Transverse colon (tissue), 4 donors: ENCODE measurements at regions of chr2 and their contacts with region 1.

Region 1: GRCh38 chr2:188788621-188789020 is 185.6 kb upstream of the COL3A1 start:
- DNase-seq: peak; percentile 48
- H3K4me3 ChIP-seq: no peak overlapping the region
- H3K27ac ChIP-seq: peak overlapping the region; percentile 79 to 86 (median 85)
- H3K4me1 ChIP-seq: peaks cover 0 to 29% (median 1%) of the 10 kb centered on the region in 4 donors
- H3K27me3 ChIP-seq: no peaks in the 10 kb centered on the region
- CTCF ChIP-seq: no peak
- EP300 ChIP-seq: no peak
- POLR2A ChIP-seq: no peak

Region 2: DNA sequence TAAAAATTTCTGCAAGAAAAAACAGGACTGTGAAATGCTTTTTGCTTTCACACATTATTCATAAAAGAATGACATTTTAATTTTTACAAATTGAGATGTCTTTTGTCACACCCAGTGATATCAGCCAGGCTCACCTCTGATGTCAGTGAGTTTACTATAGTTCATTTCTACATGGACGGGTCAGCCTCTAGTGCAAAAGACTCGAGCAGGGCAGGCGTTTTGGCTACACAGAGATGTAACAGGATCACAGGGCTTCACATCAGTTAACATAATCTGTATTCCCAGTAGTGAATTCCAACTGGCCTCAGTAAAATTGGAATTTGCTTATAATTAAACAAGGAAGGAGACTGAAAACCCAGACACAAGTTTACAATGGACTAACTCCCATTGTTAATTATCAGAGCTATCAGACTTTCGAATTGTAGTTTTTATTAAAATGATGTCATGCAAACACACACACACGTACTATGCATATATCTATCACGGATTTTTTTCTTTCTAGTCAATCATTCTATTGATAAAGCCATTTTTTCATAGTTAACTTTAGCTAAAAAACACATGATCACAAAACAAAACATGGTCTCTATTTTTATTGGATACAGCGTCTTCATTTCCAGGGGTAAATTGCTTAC is 1664.0 kb before region 1 on chr2:
- in situ Hi-C with region 1: no loop called
- intact Hi-C with region 1: no loop called
- DNase-seq: no peak
- H3K4me3 ChIP-seq: no peak overlapping the region
- H3K27ac ChIP-seq: no peak overlapping the region
- H3K4me1 ChIP-seq: no peaks in the 10 kb centered on the region
- H3K27me3 ChIP-seq: no peaks in the 10 kb centered on the region
- CTCF ChIP-seq: no peak
- EP300 ChIP-seq: no peak
- POLR2A ChIP-seq: no peak

Region 3: DNA sequence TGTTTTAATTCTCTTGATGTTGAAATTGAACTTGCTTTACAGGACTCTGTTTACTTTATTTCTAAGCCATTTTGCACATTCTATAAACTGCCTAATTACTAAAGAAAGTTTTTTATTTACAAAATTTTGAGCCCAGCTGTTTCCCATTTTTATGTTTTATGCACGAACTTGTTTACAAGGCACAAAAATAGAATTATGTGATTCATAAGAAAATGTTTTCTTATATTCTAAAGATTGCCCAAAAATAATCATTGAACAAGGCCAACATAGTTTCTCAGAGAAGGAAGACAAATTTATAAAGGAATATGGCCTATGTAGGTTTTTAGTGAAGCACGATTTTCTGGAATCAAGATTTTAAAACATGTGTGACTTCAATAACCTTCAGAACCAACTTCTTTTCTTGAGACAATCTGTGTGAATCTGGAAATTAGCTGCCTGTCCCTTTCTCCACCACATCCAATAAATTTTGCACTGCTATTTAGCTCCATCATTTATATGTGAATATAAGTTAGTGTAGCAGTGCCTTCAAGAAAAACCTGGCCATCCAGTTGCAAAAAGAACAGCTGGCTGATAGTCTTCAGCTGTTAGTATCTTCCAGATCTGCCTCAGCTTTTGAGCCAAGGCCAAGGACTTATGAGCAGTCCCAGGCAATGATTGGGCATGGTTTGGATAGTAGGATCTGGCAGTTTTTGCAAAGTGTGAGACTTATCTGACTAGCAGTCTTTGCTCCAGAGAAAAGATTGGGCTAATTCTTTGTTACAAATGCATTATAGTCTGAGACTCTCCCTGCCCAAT is 67.6 kb before region 1 on chr2:
- in situ Hi-C with region 1: no loop called
- intact Hi-C with region 1: no loop called
- DNase-seq: no peak
- H3K4me3 ChIP-seq: no peak overlapping the region
- H3K27ac ChIP-seq: no peak overlapping the region
- H3K4me1 ChIP-seq: no peaks in the 10 kb centered on the region
- H3K27me3 ChIP-seq: no peaks in the 10 kb centered on the region
- CTCF ChIP-seq: no peak
- EP300 ChIP-seq: no peak
- POLR2A ChIP-seq: no peak

Region 4: GRCh38 chr2:188865681-188866080 is 77.1 kb after region 1 on chr2:
- in situ Hi-C with region 1: no loop called
- intact Hi-C with region 1: no loop called
- DNase-seq: no peak
- H3K4me3 ChIP-seq: no peak overlapping the region
- H3K27ac ChIP-seq: no peak overlapping the region
- H3K4me1 ChIP-seq: no peaks in the 10 kb centered on the region
- H3K27me3 ChIP-seq: no peaks in the 10 kb centered on the region
- CTCF ChIP-seq: no peak
- EP300 ChIP-seq: no peak
- POLR2A ChIP-seq: no peak

Region 5: GRCh38 chr2:188978291-188979081 is 189.9 kb after region 1 on chr2:
- in situ Hi-C with region 1: no loop called
- intact Hi-C with region 1: loop called (anchors 2 kb)
- DNase-seq: no peak
- H3K4me3 ChIP-seq: peak overlapping the region in 3 of 4 donors; percentile 30 to 53 (median 45)
- H3K27ac ChIP-seq: peak overlapping the region; percentile 78 to 88 (median 82)
- H3K4me1 ChIP-seq: peaks cover 0 to 25% (median 1%) of the 10 kb centered on the region in 4 donors
- H3K27me3 ChIP-seq: no peaks in the 10 kb centered on the region
- CTCF ChIP-seq: peak in 2 of 5 experiments; percentile 12 to 18
- EP300 ChIP-seq: no peak
- POLR2A ChIP-seq: no peak

Region 6: GRCh38 chr2:189762551-189763298 is 974.1 kb after region 1 on chr2 and contains the start of gene OSGEPL1:
- in situ Hi-C with region 1: no loop called
- intact Hi-C with region 1: no loop called
- DNase-seq: peak; percentile 94
- H3K4me3 ChIP-seq: peak within 1 kb of the TSS; percentile 56 to 72 (median 64)
- H3K27ac ChIP-seq: peak within 1 kb of the TSS; percentile 82 to 94 (median 94)
- H3K4me1 ChIP-seq: peaks cover 4 to 18% (median 7%) of the 10 kb centered on the region in 4 donors
- H3K27me3 ChIP-seq: no peaks in the 10 kb centered on the region
- CTCF ChIP-seq: peak; percentile 38 to 59 (median 50)
- EP300 ChIP-seq: no peak
- POLR2A ChIP-seq: peak; percentile 37
- total RNA-seq, gene OSGEPL1: 2.7 to 14.7 (median 5.1) TPM in 3 of 4 donors, not detected in the other